Testis (tissue), 5 donors: ENCODE measurements at regions of chr19 and their contacts with region 1.

Region 1: DNA sequence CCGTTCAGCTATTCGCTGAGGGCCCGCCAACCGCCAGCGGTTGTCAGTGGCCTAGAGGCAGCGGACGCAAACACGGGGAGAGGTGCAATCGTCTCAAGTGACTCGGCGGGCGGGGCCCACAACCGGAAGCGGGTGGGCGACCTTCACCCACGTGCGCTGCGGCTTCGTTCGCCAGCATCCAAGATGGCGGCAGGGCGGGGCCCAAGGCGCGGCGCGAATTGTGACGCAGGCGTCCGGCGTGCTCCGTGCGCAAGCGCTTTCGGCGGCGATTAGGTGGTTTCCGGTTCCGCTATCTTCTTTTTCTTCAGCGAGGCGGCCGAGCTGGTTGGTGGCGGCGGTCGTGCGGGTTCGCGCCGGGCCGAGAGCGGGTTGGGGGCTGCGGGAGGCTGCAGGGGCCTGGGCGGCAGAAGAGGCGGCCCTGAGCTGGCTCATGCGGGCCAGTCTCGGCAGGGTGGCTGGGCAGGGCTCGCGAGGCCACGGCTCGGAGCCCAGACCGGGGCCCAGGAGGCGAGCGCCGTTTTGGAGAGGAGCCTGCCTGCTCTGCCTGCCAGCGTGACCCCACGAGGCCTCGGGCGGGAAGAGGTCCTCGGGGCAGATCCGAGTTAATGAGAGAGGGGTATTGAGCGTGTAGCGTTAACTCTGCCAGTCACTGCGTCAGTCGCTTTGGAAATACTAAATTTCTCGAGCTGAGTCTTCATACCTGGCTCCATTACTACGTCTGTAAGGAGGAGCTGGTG is at the start of gene UBA52:
- DNase-seq: peak; percentile 99
- H3K4me3 ChIP-seq: peak within 1 kb of the TSS; percentile 93 to 98
- H3K27ac ChIP-seq: peak within 1 kb of the TSS; percentile 89 to 92
- H3K4me1 ChIP-seq: peaks cover 11% of the 10 kb centered on the region
- H3K27me3 ChIP-seq: no peaks in the 10 kb centered on the region
- CTCF ChIP-seq: no peak
- POLR2A ChIP-seq: peak; percentile 11
- total RNA-seq, gene UBA52: 475 to 508 TPM

Region 2: DNA sequence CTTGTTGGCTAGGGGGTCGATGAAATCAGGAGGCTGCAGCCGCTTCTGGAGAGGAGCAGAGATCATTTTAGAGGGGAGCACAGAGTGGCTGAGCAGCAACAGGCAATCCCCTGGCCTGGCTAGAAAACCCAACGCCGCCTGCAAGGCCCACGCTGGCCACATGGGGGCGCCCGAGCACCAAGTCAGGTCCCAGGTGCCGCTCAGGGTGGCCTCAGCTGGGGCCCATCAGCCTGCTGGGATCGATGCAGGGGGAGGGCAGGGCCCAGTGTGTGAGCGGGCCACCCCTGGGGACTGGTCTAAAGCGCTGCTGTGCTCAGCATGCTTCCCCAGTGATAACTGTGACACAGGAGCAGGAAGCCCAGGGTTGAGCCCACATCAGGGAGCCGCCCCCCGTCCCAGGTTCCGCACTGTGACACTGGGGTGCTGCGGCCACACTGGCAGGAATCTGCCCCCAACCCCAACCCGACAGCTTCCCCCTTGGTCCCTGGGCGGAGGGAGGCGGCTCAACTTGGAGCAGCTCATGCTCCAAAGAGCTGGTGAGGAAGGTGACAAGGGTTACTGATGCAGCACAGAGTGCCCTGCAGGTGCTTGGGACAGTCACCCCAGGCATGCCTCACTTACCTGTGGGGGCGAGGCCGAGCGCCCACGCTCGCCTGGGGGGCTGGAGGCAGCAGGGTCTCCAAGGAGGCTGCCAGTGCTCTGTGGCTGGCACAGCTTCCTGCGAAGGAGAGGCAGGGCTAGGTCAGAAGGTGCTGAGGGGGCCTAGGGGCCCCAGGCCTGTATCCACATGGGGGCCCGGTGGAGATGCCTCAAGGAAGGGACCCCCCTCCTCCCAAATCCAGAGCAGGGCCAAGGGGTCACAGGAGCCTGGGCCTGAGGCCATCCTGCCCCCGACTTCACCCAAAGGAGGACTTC is 120.5 kb before region 1 on chr19:
- intact Hi-C with region 1: loop called (anchors 10 kb)
- DNase-seq: peak; percentile 93
- H3K4me3 ChIP-seq: no peak overlapping the region
- H3K27ac ChIP-seq: no peak overlapping the region
- H3K4me1 ChIP-seq: peaks cover 7% of the 10 kb centered on the region
- H3K27me3 ChIP-seq: no peaks in the 10 kb centered on the region
- CTCF ChIP-seq: peak; percentile 96 to 99 (median 98)
- POLR2A ChIP-seq: no peak

Region 3: GRCh38 chr19:18629166-18630088 is 57.7 kb after region 1 on chr19:
- intact Hi-C with region 1: no loop called
- DNase-seq: peak; percentile 37
- H3K4me3 ChIP-seq: no peak overlapping the region
- H3K27ac ChIP-seq: peak overlapping the region in 1 of 2 donors; percentile 19
- H3K4me1 ChIP-seq: no peaks in the 10 kb centered on the region
- H3K27me3 ChIP-seq: no peaks in the 10 kb centered on the region
- CTCF ChIP-seq: no peak
- POLR2A ChIP-seq: no peak